ENCODE measurements at regions of chr5 and their contacts with region 1.

Region 1: DNA sequence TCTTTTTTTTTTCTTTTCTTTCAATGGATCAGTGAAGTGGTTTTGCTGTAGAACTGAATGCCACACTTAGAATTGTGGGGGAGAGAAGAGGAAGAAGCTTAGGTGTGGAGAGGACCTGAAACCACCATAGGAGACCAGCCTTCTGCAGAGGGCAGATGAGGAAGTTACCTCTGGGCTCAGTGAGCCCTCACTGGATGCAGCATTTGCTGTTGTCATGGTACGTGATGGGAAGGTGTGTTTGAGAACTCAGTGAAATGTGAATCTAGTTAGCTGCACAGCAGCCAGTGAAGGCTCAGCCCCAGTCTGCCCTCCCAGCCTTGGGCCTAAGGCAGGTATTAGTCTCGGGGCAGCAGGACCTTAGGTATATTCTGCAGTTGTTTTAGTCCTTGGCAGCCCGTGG is 17.5 kb downstream of the CYFIP2 start:
- DNase-seq: peak; percentile 36
- ATAC-seq: peak; percentile 76
- H3K4me3 Mint-ChIP-seq: peak overlapping the region; percentile 1
- H3K27ac Mint-ChIP-seq: peak overlapping the region; percentile 79
- H3K4me1 Mint-ChIP-seq: peaks cover 88% of the 10 kb centered on the region
- H3K27me3 Mint-ChIP-seq: no peaks in the 10 kb centered on the region
- CTCF ChIP-seq: no peak

Region 2: GRCh38 chr5:157100140-157100679 is 183.2 kb before region 1 on chr5:
- CTCF ChIA-PET with region 1: no interaction called
- POLR2A ChIA-PET with region 1: no interaction called
- intact Hi-C with region 1: no loop called
- DNase-seq: peak; percentile 78
- ATAC-seq: peak; percentile 92
- H3K4me3 Mint-ChIP-seq: peak overlapping the region; percentile 35
- H3K27ac Mint-ChIP-seq: peak overlapping the region; percentile 95
- H3K4me1 Mint-ChIP-seq: peaks cover 36% of the 10 kb centered on the region
- H3K27me3 Mint-ChIP-seq: no peaks in the 10 kb centered on the region
- CTCF ChIP-seq: no peak

Region 3: GRCh38 chr5:157354800-157355199 is 71.4 kb after region 1 on chr5:
- CTCF ChIA-PET with region 1: no interaction called
- POLR2A ChIA-PET with region 1: no interaction called
- intact Hi-C with region 1: loop called (anchors 5 kb)
- DNase-seq: no peak
- ATAC-seq: no peak
- H3K4me3 Mint-ChIP-seq: no peak overlapping the region
- H3K27ac Mint-ChIP-seq: no peak overlapping the region
- H3K4me1 Mint-ChIP-seq: peaks cover 37% of the 10 kb centered on the region
- H3K27me3 Mint-ChIP-seq: no peaks in the 10 kb centered on the region
- CTCF ChIP-seq: no peak